Endothelial cell of umbilical vein (primary cell): ENCODE measurements at regions of chr6 and their contacts with region 1.

Region 1: DNA sequence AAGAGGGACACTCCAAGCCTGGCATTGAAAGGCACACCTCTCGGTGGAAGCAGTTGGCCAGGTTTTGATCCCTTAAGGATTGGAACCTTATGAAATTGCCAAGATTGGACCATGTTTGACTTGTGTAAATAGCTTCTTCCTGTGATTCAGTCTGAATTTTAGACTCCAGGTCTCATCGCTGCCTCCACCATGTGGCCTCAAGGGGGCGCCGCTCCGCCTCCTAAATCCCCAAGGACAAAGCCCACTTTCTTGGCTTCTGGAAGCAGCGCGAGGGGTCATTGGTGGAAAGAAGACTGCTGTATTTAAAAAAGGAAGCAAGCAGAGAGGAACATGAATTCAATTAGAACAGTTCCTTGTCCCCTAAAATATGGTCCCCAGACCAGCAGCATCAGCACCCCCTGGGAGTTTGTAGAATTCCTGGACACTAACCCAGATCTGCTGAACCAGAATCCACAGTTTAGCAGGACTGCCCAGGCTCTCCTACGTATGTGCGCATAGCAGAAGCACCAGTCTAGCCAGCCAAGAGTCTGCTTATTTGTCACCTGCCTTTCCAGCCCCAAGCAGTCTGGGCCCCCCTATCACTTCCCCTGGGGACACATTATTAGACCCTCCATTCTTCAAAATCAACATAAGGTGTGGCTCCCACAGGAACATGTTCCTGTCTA is 108.5 kb downstream of the LY86 start:
- DNase-seq: peak; percentile 91
- H3K4me3 ChIP-seq: no peak overlapping the region
- H3K27ac ChIP-seq: peak overlapping the region; percentile 20
- H3K4me1 ChIP-seq: peaks cover 12% of the 10 kb centered on the region
- H3K27me3 ChIP-seq: no peaks in the 10 kb centered on the region
- CTCF ChIP-seq: peak; percentile 90 to 96
- POLR2A ChIP-seq: no peak

Region 2: GRCh38 chr6:6707143-6707542 is 10.1 kb after region 1 on chr6:
- CTCF ChIA-PET with region 1: interaction called, 24 read pairs
- POLR2A ChIA-PET with region 1: no interaction called
- dilution Hi-C with region 1: no loop called
- intact Hi-C with region 1: no loop called
- DNase-seq: no peak
- H3K4me3 ChIP-seq: no peak overlapping the region
- H3K27ac ChIP-seq: no peak overlapping the region
- H3K4me1 ChIP-seq: no peaks in the 10 kb centered on the region
- H3K27me3 ChIP-seq: peaks cover 5% of the 10 kb centered on the region in 2 experiments
- CTCF ChIP-seq: no peak
- POLR2A ChIP-seq: no peak

Region 3: GRCh38 chr6:6717953-6718352 is 21.0 kb after region 1 on chr6:
- CTCF ChIA-PET with region 1: interaction called, 51 read pairs
- POLR2A ChIA-PET with region 1: no interaction called
- dilution Hi-C with region 1: no loop called
- intact Hi-C with region 1: no loop called
- DNase-seq: peak; percentile 74
- H3K4me3 ChIP-seq: no peak overlapping the region
- H3K27ac ChIP-seq: no peak overlapping the region
- H3K4me1 ChIP-seq: no peaks in the 10 kb centered on the region
- H3K27me3 ChIP-seq: no peaks in the 10 kb centered on the region
- CTCF ChIP-seq: no peak
- POLR2A ChIP-seq: no peak

Region 4: DNA sequence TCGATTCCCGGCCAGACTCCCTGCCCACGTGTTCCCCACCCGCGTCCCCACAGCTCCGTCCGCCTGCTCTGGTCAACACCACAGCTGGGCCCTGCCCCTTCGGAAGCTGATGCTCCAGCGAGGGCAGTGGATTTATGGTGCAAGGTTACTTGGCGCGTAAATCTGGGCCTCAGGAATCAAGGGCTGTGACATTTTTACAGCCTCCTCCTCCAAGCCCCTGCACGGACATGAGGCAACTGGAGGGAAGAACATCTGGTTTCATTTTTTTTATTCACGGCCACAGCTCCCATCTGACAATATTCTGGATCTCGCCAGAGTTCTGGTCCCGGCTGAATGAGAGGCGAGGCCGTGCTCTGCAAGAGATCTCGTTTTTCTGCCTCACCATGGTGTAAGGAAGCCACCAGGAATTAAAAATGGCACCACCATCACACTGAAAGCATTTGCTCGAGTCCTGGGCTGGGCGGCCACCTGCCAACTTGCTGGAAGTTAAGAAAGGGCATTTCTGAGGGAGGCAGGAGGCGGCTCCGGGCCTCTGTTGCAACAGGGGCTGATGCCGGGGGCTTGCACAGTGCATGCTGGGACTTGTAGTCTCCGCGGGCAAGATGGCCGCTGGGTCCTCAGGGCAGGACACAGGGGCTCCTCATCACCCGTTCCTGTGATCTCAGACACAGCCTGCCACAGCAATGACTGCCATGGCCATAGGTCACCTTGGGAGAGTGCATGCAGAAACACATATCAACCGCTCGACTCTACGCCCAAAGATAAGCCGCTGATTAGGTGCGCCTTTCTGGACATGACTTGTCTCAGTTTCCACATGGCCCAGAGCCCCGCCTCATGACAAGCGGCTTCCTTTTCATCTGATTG is 40.0 kb after region 1 on chr6:
- CTCF ChIA-PET with region 1: interaction called, 11 read pairs
- POLR2A ChIA-PET with region 1: no interaction called
- dilution Hi-C with region 1: no loop called
- intact Hi-C with region 1: no loop called
- DNase-seq: peak; percentile 18
- H3K4me3 ChIP-seq: peak overlapping the region in 1 of 3 experiments; percentile 14
- H3K27ac ChIP-seq: no peak overlapping the region
- H3K4me1 ChIP-seq: no peaks in the 10 kb centered on the region
- H3K27me3 ChIP-seq: peaks cover 5 to 8% of the 10 kb centered on the region in 2 experiments
- CTCF ChIP-seq: no peak
- POLR2A ChIP-seq: no peak

Region 5: DNA sequence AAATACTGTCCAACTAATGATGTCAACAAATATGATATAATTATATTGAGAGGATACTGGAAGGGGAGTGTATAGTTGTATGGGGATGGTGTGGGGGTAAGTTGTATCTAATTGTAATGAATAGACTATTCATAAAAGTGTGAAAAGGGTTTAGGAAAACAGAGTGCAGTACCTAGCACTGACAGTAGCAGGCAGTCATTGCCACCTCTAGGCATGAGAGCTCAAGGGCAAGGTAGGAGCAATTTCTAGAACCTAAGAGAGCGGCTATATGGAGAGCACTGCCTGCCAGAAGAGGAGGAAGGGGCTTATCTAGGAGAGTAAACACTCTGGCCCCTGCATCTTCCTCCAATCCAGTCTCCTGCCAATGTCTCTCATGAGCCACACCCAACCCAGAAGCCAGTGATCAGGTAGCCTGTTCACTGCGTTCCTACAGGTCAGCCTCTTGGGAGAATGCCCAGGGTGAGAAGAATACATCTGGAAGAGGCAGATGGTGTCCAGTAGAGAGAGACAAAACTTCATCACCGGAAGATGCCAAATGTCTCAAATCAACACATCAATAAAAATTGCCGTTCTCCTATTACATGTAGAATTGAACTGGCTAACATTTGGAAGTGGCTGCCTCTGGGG is 91.5 kb after region 1 on chr6:
- CTCF ChIA-PET with region 1: interaction called, 7 read pairs
- POLR2A ChIA-PET with region 1: no interaction called
- dilution Hi-C with region 1: no loop called
- intact Hi-C with region 1: loop called (anchors 5 kb)
- DNase-seq: peak; percentile 30
- H3K4me3 ChIP-seq: no peak overlapping the region
- H3K27ac ChIP-seq: no peak overlapping the region
- H3K4me1 ChIP-seq: no peaks in the 10 kb centered on the region
- H3K27me3 ChIP-seq: peaks cover 0 to 6% of the 10 kb centered on the region in 2 experiments
- CTCF ChIP-seq: peak; percentile 43 to 60
- POLR2A ChIP-seq: no peak

Region 6: DNA sequence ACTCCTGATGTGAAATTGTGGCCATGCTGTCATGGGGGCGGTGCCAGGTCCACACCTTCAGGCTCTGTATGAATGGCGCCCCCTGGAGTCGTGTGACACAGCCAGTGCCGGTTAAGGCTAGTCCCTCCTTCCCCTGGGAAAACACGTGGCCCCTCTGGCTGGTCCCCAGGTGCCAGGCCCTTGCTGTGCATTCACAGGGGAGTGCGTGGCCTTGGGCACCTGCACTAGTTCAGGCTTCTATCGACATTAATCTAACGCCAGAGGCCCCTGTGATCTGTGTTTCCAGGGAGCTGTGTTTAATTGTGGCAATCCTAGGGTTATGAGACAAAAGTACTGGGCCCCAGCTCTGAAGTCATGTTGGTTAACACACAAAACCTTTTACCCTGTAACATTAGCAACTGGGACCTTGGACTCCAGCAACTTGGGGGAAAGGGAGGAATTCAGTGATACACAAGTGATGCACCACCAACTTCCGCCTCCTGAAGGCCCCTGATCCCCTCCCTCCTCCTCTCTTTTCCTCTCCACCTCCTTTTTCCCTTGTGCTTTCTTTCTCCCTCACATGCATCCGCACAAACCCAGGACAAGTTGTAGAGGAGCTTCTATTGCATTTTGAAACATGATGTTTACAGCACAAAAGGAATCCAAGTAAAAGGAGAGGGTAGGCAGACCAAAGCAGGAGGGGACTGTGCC is 542.0 kb after region 1 on chr6:
- CTCF ChIA-PET with region 1: interaction called, 21 read pairs
- POLR2A ChIA-PET with region 1: no interaction called
- dilution Hi-C with region 1: no loop called
- intact Hi-C with region 1: loop called (anchors 1 kb)
- DNase-seq: peak; percentile 66
- H3K4me3 ChIP-seq: no peak overlapping the region
- H3K27ac ChIP-seq: no peak overlapping the region
- H3K4me1 ChIP-seq: no peaks in the 10 kb centered on the region
- H3K27me3 ChIP-seq: no peaks in the 10 kb centered on the region
- CTCF ChIP-seq: peak; percentile 79 to 83
- POLR2A ChIP-seq: no peak